ENCODE measurements at regions of chr10 and their contacts with region 1.

Region 1: DNA sequence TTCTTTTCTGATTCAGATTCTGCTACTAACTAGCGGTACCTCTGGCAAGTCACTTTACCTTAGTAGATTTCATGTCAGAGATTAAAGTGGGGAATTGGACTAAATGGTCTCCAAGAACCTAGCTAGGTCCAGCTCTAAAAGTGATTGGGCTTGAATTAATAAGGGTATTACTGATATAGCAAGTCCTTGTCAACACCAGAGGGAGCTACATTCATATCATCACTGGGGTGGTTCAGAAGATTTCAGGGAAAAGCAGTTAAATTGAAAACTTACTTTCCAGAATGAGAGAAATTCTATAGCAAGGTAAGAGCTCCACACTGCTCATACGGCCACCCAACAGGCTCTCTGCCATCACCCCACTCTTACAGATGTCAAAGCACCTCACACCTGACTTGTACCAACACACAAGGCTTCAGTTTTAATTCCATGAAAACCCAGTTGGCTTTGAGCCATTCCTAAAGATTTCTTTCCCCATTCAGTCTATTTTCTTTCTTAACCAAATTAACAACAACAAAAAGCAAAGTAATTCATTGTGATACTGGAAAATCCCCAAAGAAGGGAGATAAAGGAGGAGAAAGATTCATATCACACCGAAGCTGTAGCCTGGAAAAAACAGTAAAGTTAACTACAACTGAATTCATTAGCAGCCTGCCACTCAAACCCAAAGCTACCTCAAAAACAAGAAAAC is 38.0 kb upstream of the SPOCK2 start:
- DNase-seq: no peak
- H3K4me3 Mint-ChIP-seq: no peak overlapping the region
- H3K27ac Mint-ChIP-seq: peak overlapping the region; percentile 6
- H3K4me1 Mint-ChIP-seq: peaks cover 34% of the 10 kb centered on the region
- H3K27me3 Mint-ChIP-seq: no peaks in the 10 kb centered on the region

Region 2: DNA sequence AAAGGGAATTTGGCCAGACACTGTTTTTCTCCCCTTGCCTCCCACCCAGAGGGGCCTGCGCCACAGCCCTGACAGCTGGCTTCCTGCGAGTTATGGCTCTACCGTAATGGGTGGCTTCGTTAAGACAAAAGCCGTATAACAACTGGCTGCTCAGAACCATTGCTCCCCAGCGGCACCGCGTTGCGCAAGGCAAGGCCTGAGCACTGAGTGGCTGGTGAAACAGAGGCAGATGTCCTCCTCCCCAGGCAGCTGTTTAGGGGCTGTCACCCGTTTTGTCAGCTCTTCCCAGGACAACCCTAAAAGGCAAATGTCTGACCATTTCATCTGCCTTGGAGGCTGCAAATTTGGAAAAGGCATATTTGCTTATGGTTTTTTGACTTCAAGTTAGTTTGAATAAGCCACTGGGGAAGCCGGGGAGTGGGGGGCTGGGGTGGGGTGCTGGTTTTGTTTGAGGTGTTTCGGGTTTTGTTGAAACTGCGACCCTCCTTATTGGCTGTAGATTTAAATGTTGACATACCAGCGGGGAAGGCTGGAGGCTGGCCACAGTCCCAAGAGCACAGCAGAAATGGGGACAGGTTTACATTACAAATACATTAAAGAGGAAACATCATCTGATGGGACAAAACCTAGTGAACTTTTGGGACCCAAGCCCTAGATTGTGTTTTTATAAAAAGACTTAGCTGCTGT is 37.3 kb before region 1 on chr10:
- CTCF ChIA-PET with region 1: interaction called, 11 read pairs
- POLR2A ChIA-PET with region 1: interaction called, 3 read pairs
- intact Hi-C with region 1: loop called (anchors 5 kb)
- DNase-seq: peak; percentile 76
- H3K4me3 Mint-ChIP-seq: peak overlapping the region; percentile 100
- H3K27ac Mint-ChIP-seq: peak overlapping the region; percentile 99
- H3K4me1 Mint-ChIP-seq: peaks cover 46% of the 10 kb centered on the region
- H3K27me3 Mint-ChIP-seq: no peaks in the 10 kb centered on the region

Region 3: DNA sequence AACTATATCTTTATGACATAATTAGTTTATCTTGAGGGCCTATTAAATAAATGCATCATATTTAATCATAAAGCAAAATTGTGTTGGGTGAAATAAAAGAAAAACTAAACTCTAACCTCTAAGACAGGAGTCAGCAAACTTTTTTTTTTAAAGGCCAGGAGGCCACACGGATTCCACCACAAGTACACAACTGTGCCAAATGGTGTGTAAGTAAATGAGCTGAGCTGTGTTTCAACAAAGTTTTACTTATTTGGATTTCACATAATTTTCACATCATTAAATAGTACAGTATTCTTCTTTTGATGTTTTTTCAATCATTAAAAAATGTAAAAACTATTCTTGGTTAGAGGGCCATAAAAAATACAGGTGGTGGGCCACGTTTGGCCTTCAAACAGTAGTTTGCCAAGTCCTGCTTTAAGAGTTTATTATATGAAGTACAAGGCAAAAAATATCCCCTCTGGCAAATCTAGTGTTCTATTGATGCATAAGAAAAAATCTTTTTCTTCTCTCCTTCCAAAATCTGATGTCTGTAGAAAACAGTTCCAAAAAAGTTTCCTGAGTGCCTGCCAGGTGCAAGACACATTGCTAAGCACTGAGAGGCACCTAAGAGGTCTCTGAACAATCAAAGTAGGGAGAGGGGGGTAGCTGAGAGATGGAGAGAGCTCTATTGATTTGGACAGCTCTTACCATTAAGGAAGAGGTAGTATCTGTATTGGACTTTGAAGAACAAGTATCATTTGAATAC is 11.4 kb before region 1 on chr10:
- CTCF ChIA-PET with region 1: interaction called, 14 read pairs
- POLR2A ChIA-PET with region 1: no interaction called
- intact Hi-C with region 1: no loop called
- DNase-seq: no peak
- H3K4me3 Mint-ChIP-seq: no peak overlapping the region
- H3K27ac Mint-ChIP-seq: no peak overlapping the region
- H3K4me1 Mint-ChIP-seq: peaks cover 19% of the 10 kb centered on the region
- H3K27me3 Mint-ChIP-seq: no peaks in the 10 kb centered on the region

Region 4: GRCh38 chr10:72162978-72163377 is 36.6 kb after region 1 on chr10:
- CTCF ChIA-PET with region 1: no interaction called
- POLR2A ChIA-PET with region 1: no interaction called
- intact Hi-C with region 1: loop called (anchors 5 kb)
- DNase-seq: no peak
- H3K4me3 Mint-ChIP-seq: no peak overlapping the region
- H3K27ac Mint-ChIP-seq: peak overlapping the region; percentile 65
- H3K4me1 Mint-ChIP-seq: peaks cover 26% of the 10 kb centered on the region
- H3K27me3 Mint-ChIP-seq: no peaks in the 10 kb centered on the region

Region 5: GRCh38 chr10:72223743-72224101 is 97.4 kb after region 1 on chr10:
- CTCF ChIA-PET with region 1: interaction called, 37 read pairs
- POLR2A ChIA-PET with region 1: no interaction called
- intact Hi-C with region 1: loop called (anchors 2 kb)
- DNase-seq: peak; percentile 41
- H3K4me3 Mint-ChIP-seq: no peak overlapping the region
- H3K27ac Mint-ChIP-seq: peak overlapping the region; percentile 89
- H3K4me1 Mint-ChIP-seq: peaks cover 56% of the 10 kb centered on the region
- H3K27me3 Mint-ChIP-seq: no peaks in the 10 kb centered on the region

Region 6: DNA sequence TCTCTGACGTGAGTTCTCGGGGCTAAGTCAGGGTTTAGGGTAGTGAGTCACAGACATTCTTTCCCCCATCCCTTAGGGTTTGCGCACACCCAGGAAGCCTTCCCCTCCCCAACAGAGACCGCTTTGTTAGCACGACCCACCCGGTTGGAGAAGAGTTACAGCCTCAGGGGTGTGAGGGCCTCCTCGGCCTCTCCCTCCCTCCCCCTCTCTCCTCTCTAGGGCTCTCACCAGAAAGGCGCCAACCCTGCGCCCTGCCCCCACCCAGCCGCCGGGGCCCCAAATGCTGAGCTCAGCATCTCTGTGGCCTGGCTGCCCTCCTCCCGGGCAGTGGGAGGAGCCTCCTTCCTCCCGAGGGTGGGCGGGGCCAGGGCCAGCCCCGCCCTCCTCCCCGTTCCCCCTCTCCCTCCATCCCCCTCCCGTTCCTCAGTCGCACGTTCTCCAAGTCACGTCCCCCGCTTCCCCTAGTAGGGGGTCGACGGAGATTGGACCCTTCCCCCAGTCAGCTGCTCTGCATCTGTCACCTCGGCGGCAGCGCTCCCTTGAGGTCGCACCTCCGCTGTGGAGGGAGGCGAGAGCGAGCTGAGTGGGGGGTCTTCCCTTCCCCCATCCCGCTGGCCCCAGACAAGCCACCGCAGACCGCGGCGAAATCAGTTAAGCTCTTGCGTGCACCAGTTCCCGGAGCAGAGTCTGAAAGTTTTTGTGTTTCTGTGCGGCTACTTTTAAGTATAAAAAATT is 134.4 kb after region 1 on chr10:
- CTCF ChIA-PET with region 1: no interaction called
- POLR2A ChIA-PET with region 1: no interaction called
- intact Hi-C with region 1: no loop called
- DNase-seq: peak; percentile 95
- H3K4me3 Mint-ChIP-seq: peak overlapping the region; percentile 84
- H3K27ac Mint-ChIP-seq: peak overlapping the region; percentile 99
- H3K4me1 Mint-ChIP-seq: peaks cover 60% of the 10 kb centered on the region
- H3K27me3 Mint-ChIP-seq: peaks cover 2% of the 10 kb centered on the region